Endothelial cell of umbilical vein (primary cell): ENCODE measurements at regions of chr16 and their contacts with region 1.

Region 1: DNA sequence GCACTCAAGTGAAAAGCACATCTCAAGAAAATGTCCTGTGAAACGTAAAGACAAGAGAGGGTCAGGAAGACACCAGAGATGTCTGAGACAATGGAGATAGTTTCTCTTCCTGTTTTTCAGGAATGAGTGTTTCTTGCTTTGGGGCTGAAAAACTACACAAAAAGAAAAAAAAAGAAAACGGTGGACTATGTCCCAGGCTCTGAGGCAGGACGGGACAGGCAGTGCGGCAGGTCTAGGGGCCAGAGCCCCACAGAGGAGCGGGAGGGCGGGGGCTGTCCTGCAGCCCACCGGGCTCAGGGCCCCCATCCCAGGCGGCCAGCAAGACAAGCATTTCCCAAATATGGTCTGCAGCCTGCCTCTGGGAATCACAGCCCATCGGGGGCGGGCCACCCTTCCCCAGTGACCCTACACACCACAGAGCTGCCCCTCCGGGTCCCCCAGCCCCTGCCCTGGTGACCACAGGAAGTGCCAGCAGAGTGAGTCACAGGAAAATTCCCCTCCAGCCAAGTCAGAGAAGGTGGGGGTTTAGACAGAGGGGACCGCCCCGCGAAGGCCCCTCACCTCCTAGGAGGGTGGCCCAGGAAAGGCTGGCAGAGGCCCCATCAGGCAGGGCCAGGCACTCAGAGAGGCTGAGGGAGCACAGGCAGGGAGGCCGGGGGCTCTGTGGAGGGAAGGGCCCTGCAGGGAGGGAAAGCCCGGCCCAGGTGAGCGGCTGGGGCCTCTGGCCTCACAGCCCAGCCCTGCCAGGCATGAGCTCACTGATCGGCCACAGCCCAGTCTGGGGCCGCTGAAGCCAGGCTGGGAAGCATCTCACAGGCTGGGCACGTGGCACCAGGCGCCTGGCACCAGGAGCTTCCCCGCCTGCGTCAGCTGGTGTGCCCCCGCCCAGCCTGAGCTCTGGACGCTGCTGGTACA is 6.3 kb downstream of the BCAR1 start:
- DNase-seq: peak; percentile 94
- H3K4me3 ChIP-seq: peak overlapping the region in 1 of 3 experiments; percentile 5
- H3K27ac ChIP-seq: peak overlapping the region; percentile 92
- H3K4me1 ChIP-seq: peaks cover 66% of the 10 kb centered on the region
- H3K27me3 ChIP-seq: no peaks in the 10 kb centered on the region
- CTCF ChIP-seq: no peak
- POLR2A ChIP-seq: peak; percentile 74

Region 2: GRCh38 chr16:75206749-75207451 is 38.2 kb before region 1 on chr16 and contains the start of gene CTRB2:
- CTCF ChIA-PET with region 1: no interaction called
- POLR2A ChIA-PET with region 1: no interaction called
- dilution Hi-C with region 1: no loop called
- intact Hi-C with region 1: loop called (anchors 1 kb)
- DNase-seq: no peak
- H3K4me3 ChIP-seq: no peak within 1 kb of the TSS
- H3K27ac ChIP-seq: no peak within 1 kb of the TSS
- H3K4me1 ChIP-seq: no peaks in the 10 kb centered on the region
- H3K27me3 ChIP-seq: no peaks in the 10 kb centered on the region
- CTCF ChIP-seq: no peak
- POLR2A ChIP-seq: no peak
- total RNA-seq, gene CTRB2: not detected in 2 replicates

Region 3: GRCh38 chr16:75265845-75266701 is 21.0 kb after region 1 on chr16:
- CTCF ChIA-PET with region 1: interaction called, 5 read pairs
- POLR2A ChIA-PET with region 1: interaction called, 8 read pairs
- dilution Hi-C with region 1: no loop called
- intact Hi-C with region 1: loop called (anchors 1 kb)
- DNase-seq: peak; percentile 71
- H3K4me3 ChIP-seq: peak overlapping the region; percentile 82 to 89 (median 88)
- H3K27ac ChIP-seq: peak overlapping the region; percentile 93
- H3K4me1 ChIP-seq: peaks cover 46% of the 10 kb centered on the region
- H3K27me3 ChIP-seq: no peaks in the 10 kb centered on the region
- CTCF ChIP-seq: no peak
- POLR2A ChIP-seq: peak; percentile 69